ENCODE measurements at regions of chr7 and their contacts with region 1.

Region 1: GRCh38 chr7:129163875-129164544 is 19.5 kb downstream of the TSPAN33 start:
- DNase-seq: peak; percentile 37
- ATAC-seq: peak; percentile 66
- H3K4me3 Mint-ChIP-seq: no peak overlapping the region
- H3K27ac Mint-ChIP-seq: no peak overlapping the region
- H3K4me1 Mint-ChIP-seq: peaks cover 8% of the 10 kb centered on the region
- H3K27me3 Mint-ChIP-seq: no peaks in the 10 kb centered on the region
- CTCF ChIP-seq: peak; percentile 91

Region 2: GRCh38 chr7:129037585-129037984 is 126.4 kb before region 1 on chr7:
- CTCF ChIA-PET with region 1: no interaction called
- POLR2A ChIA-PET with region 1: no interaction called
- intact Hi-C with region 1: no loop called
- DNase-seq: no peak
- ATAC-seq: no peak
- H3K4me3 Mint-ChIP-seq: no peak overlapping the region
- H3K27ac Mint-ChIP-seq: no peak overlapping the region
- H3K4me1 Mint-ChIP-seq: peaks cover 40% of the 10 kb centered on the region
- H3K27me3 Mint-ChIP-seq: no peaks in the 10 kb centered on the region
- CTCF ChIP-seq: no peak

Region 3: DNA sequence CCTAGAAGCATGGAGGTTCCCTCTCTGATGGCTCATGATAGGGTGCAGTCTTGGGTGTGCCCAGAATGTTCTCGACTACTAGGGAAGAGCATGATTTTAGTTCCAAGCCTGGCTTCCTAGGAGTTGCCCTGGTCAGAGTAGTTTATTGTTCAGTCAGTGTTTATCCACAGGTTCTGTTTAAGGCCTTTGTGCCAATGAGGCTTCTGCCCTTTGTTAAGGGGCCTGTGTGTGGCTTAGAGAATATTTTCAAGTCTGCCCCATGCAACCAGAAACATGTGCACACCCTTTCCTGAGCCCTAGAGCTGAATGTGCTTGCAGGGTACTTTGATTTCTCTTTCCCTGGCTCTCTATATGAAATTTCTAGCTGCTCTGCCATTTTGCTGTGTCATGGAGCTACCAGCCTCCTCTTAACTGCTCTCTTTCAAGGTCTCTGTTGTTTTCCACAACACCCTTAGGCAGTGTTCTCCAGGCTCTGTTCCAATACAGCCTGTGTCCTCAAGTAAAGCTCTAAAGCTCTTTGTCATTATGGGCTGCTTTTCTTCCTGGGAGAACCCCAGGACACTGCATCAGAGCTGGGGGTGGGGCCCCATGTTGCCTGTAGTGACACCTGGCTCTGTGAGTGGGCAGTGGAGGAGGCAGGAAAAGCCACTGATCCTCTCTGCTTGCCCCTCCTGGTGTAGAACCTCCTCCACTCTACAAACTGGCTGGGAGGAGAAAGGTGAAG is 53.6 kb before region 1 on chr7:
- CTCF ChIA-PET with region 1: interaction called, 14 read pairs
- POLR2A ChIA-PET with region 1: no interaction called
- intact Hi-C with region 1: no loop called
- DNase-seq: peak; percentile 19
- ATAC-seq: peak; percentile 34
- H3K4me3 Mint-ChIP-seq: no peak overlapping the region
- H3K27ac Mint-ChIP-seq: no peak overlapping the region
- H3K4me1 Mint-ChIP-seq: peaks cover 5% of the 10 kb centered on the region
- H3K27me3 Mint-ChIP-seq: peaks cover under 1% of the 10 kb centered on the region
- CTCF ChIP-seq: no peak

Region 4: GRCh38 chr7:129136887-129137642 is 26.9 kb before region 1 on chr7:
- CTCF ChIA-PET with region 1: interaction called, 12 read pairs
- POLR2A ChIA-PET with region 1: interaction called, 3 read pairs
- intact Hi-C with region 1: no loop called
- DNase-seq: no peak
- ATAC-seq: peak; percentile 87
- H3K4me3 Mint-ChIP-seq: peak overlapping the region; percentile 58
- H3K27ac Mint-ChIP-seq: peak overlapping the region; percentile 92
- H3K4me1 Mint-ChIP-seq: peaks cover 26% of the 10 kb centered on the region
- H3K27me3 Mint-ChIP-seq: no peaks in the 10 kb centered on the region
- CTCF ChIP-seq: no peak

Region 5: DNA sequence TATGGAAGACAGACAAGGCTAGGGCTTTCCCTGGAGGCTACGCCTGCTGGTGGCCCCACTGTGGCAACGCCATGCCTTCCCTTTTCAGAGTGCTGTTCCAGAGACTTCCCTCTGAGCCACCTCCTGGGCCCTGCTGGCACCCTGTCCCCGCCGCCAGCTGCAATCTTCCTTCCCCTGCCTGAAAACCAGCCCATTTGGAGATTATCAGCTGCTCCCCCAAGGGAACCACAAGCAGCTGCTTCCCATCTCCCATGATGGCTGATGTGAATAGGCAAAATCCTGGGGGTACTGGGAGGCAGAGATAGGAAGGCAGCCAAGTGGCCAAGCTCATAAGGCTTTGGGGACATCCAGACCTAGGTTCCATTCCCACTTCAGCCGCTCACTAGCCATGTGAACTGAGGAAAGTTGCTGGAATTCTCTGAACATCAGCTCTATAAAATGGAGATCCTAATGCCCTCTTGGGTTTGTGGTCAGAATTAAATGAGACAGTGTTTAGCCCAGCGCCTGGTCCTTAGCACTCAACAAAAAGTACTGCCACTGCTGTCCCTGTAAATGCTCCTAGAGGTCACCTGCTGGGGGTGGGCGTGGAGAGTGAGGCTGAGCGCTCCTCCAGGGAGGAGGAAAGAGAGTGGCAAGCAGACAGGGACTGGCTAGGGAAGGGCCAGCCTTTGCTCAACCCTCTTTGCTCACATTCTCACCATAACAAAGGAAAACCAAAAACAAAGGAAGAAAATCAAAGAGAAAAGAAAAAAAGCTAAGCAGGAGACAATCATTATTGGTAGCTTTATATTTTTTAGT is 13.6 kb before region 1 on chr7:
- CTCF ChIA-PET with region 1: interaction called, 26 read pairs
- POLR2A ChIA-PET with region 1: no interaction called
- intact Hi-C with region 1: no loop called
- DNase-seq: no peak
- ATAC-seq: no peak
- H3K4me3 Mint-ChIP-seq: no peak overlapping the region
- H3K27ac Mint-ChIP-seq: no peak overlapping the region
- H3K4me1 Mint-ChIP-seq: peaks cover 6% of the 10 kb centered on the region
- H3K27me3 Mint-ChIP-seq: no peaks in the 10 kb centered on the region
- CTCF ChIP-seq: no peak

Region 6: GRCh38 chr7:129210256-129210988 is 46.4 kb after region 1 on chr7:
- CTCF ChIA-PET with region 1: interaction called, 198 read pairs
- POLR2A ChIA-PET with region 1: interaction called, 3 read pairs
- intact Hi-C with region 1: loop called (anchors 1 kb)
- DNase-seq: peak; percentile 88
- ATAC-seq: peak; percentile 94
- H3K4me3 Mint-ChIP-seq: no peak overlapping the region
- H3K27ac Mint-ChIP-seq: no peak overlapping the region
- H3K4me1 Mint-ChIP-seq: no peaks in the 10 kb centered on the region
- H3K27me3 Mint-ChIP-seq: no peaks in the 10 kb centered on the region
- CTCF ChIP-seq: peak; percentile 86